RWPE1 (cell line): ENCODE measurements at regions of chr14 and their contacts with region 1.

Region 1: GRCh38 chr14:88181072-88181471 is 142.0 kb downstream of the KCNK10 start:
- DNase-seq: no peak
- H3K27ac ChIP-seq: no peak overlapping the region
- CTCF ChIP-seq: no peak

Region 2: GRCh38 chr14:88098163-88098562 is 82.9 kb before region 1 on chr14:
- CTCF ChIA-PET with region 1: interaction called, 10 read pairs
- POLR2A ChIA-PET with region 1: no interaction called
- DNase-seq: no peak
- H3K27ac ChIP-seq: no peak overlapping the region
- CTCF ChIP-seq: no peak

Region 3: DNA sequence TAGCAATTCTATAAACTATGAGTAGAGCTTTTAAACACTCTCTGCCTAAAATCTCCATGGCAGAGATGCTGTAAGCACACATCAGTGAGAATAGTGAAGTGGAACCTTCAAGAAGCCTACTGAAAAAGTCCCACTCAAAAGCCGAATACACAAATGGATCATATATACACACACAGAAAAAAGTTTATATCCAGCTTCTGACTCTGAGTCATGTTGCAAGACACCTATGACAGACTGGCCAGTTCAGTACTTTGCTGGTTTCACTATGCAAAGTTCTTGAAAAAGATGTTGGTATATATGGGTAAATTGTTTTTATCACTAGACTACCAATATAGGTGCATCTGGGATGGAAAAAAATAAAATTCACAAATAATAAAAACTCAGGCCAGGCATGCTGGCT is 15.9 kb after region 1 on chr14:
- CTCF ChIA-PET with region 1: no interaction called
- POLR2A ChIA-PET with region 1: no interaction called
- DNase-seq: no peak
- H3K27ac ChIP-seq: no peak overlapping the region
- CTCF ChIP-seq: no peak